Stomach (tissue), 19 donors: ENCODE measurements at regions of chr16 and their contacts with region 1.

Region 1: GRCh38 chr16:21083729-21084268 is 66.8 kb downstream of the DNAH3 start:
- DNase-seq: peak; percentile 71 to 76
- H3K4me3 ChIP-seq: no peak overlapping the region
- H3K27ac ChIP-seq: no peak overlapping the region
- H3K4me1 ChIP-seq: no peaks in the 10 kb centered on the region
- H3K27me3 ChIP-seq: no peaks in the 10 kb centered on the region
- CTCF ChIP-seq: peak in 5 of 7 experiments; percentile 35 to 75 (median 63)
- EP300 ChIP-seq: no peak
- POLR2A ChIP-seq: no peak

Region 2: DNA sequence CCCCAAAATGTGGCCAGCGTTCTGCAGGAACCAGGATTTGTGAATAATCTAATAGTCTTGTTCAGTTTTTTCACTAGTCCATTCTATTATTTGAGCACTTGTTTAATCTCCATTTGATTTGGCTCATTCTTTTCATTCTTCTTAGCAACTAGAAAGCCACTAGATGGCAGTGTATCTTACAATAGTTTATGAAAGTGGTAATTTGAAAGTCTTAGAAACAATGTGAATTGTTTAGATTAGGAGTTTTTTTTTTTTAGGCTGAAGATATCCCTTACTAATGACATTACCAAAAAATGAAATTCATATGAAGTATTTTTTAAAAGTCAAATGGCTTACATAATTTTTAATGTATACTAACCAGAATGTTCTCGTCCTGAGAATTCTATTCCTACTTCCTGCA is 284.2 kb before region 1 on chr16:
- intact Hi-C with region 1: loop called (anchors 10 kb)
- DNase-seq: peak in 1 of 2 donors; percentile 41
- H3K4me3 ChIP-seq: no peak overlapping the region
- H3K27ac ChIP-seq: peak overlapping the region in 1 of 5 donors; percentile 1
- H3K4me1 ChIP-seq: peaks cover 0 to 31% (median 15%) of the 10 kb centered on the region in 4 donors
- H3K27me3 ChIP-seq: no peaks in the 10 kb centered on the region
- CTCF ChIP-seq: peak in 5 of 7 experiments; percentile 45 to 58 (median 53)
- EP300 ChIP-seq: no peak
- POLR2A ChIP-seq: no peak

Region 3: DNA sequence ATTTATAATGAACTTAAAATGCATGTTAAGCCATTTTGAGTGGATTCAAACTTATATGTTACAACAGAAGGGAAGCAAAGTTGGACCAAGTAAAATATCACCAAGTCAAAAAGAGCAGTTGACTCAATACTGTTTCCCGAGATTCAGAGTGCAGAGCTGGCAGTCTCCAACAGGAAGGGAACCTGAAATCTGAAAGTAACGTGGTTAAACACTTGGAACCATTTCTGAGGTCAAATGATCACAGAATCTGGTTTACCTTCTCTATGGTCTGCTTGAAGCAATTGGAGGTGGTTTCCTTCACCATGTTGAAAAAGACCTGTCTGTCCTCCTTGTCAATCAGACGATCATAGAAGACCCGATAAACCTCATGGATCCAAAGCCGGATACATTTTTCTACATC is 96.8 kb before region 1 on chr16:
- intact Hi-C with region 1: no loop called
- DNase-seq: no peak
- H3K4me3 ChIP-seq: no peak overlapping the region
- H3K27ac ChIP-seq: no peak overlapping the region
- H3K4me1 ChIP-seq: no peaks in the 10 kb centered on the region
- H3K27me3 ChIP-seq: no peaks in the 10 kb centered on the region
- CTCF ChIP-seq: no peak
- EP300 ChIP-seq: no peak
- POLR2A ChIP-seq: no peak

Region 4: DNA sequence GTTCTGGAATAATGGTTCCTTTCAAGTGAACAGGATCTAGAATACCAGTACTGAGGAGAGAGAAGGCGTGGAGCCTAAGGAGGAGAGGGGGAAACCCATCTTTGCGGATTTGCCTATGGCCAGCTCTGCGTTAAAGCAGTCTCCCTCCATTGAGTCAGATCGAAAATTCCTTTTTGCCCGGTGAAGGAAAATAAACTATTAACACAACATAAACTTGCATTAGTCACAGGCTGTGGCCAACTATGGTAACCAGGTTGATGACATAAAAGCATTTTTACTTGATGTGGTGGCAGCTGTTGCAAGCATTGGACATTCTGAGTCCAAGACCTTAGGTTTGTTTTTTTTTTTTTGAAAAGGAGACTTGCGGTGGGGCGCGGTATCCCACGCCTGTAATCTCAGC is 83.6 kb after region 1 on chr16:
- intact Hi-C with region 1: no loop called
- DNase-seq: no peak
- H3K4me3 ChIP-seq: no peak overlapping the region
- H3K27ac ChIP-seq: peak overlapping the region in 1 of 5 donors; percentile 51
- H3K4me1 ChIP-seq: peaks cover 11 to 36% (median 17%) of the 10 kb centered on the region in 4 donors
- H3K27me3 ChIP-seq: no peaks in the 10 kb centered on the region
- CTCF ChIP-seq: no peak
- EP300 ChIP-seq: no peak
- POLR2A ChIP-seq: no peak

Region 5: GRCh38 chr16:21184834-21185233 is 101.0 kb after region 1 on chr16:
- intact Hi-C with region 1: no loop called
- DNase-seq: no peak
- H3K4me3 ChIP-seq: no peak overlapping the region
- H3K27ac ChIP-seq: no peak overlapping the region
- H3K4me1 ChIP-seq: peaks cover 0 to 10% (median 7%) of the 10 kb centered on the region in 4 donors
- H3K27me3 ChIP-seq: no peaks in the 10 kb centered on the region
- CTCF ChIP-seq: no peak
- EP300 ChIP-seq: no peak
- POLR2A ChIP-seq: no peak